B cell (primary cell): ENCODE measurements at regions of chr3 and their contacts with region 1.

Region 1: GRCh38 chr3:10389995-10390394 is 69.1 kb upstream of the SEC13 start:
- DNase-seq: peak; percentile 83
- ATAC-seq: peak; percentile 91
- H3K4me3 ChIP-seq: peak overlapping the region in 2 of 5 experiments; percentile 29 to 31
- H3K4me3 Mint-ChIP-seq: peak overlapping the region; percentile 17
- H3K27ac ChIP-seq: peak overlapping the region; percentile 81 to 89
- H3K27ac Mint-ChIP-seq: peak overlapping the region; percentile 95
- H3K4me1 ChIP-seq: peaks cover 54 to 92% of the 10 kb centered on the region in 2 donors
- H3K4me1 Mint-ChIP-seq: peaks cover 92% of the 10 kb centered on the region
- H3K27me3 ChIP-seq: no peaks in the 10 kb centered on the region
- H3K27me3 Mint-ChIP-seq: no peaks in the 10 kb centered on the region
- CTCF ChIP-seq: no peak

Region 2: GRCh38 chr3:10357592-10358308 is 32.2 kb before region 1 on chr3:
- CTCF ChIA-PET with region 1: interaction called, 4 read pairs
- POLR2A ChIA-PET with region 1: no interaction called
- intact Hi-C with region 1: loop called (anchors 5 kb)
- DNase-seq: no peak
- ATAC-seq: peak; percentile 91
- H3K4me3 ChIP-seq: no peak overlapping the region
- H3K4me3 Mint-ChIP-seq: no peak overlapping the region
- H3K27ac ChIP-seq: no peak overlapping the region
- H3K27ac Mint-ChIP-seq: peak overlapping the region; percentile 59
- H3K4me1 ChIP-seq: peaks cover 15 to 35% of the 10 kb centered on the region in 2 donors
- H3K4me1 Mint-ChIP-seq: peaks cover 52% of the 10 kb centered on the region
- H3K27me3 ChIP-seq: peaks cover 0 to 4% (median 0%) of the 10 kb centered on the region in 4 experiments
- H3K27me3 Mint-ChIP-seq: peaks cover 5% of the 10 kb centered on the region
- CTCF ChIP-seq: no peak

Region 3: GRCh38 chr3:10542518-10542917 is 152.5 kb after region 1 on chr3:
- CTCF ChIA-PET with region 1: no interaction called
- POLR2A ChIA-PET with region 1: no interaction called
- intact Hi-C with region 1: no loop called
- DNase-seq: no peak
- ATAC-seq: no peak
- H3K4me3 ChIP-seq: no peak overlapping the region
- H3K4me3 Mint-ChIP-seq: no peak overlapping the region
- H3K27ac ChIP-seq: no peak overlapping the region
- H3K27ac Mint-ChIP-seq: no peak overlapping the region
- H3K4me1 ChIP-seq: no peaks in the 10 kb centered on the region
- H3K4me1 Mint-ChIP-seq: no peaks in the 10 kb centered on the region
- H3K27me3 ChIP-seq: peaks cover 0 to under 1% (median 0%) of the 10 kb centered on the region in 4 experiments
- H3K27me3 Mint-ChIP-seq: peaks cover 19% of the 10 kb centered on the region
- CTCF ChIP-seq: no peak

Region 4: GRCh38 chr3:11145888-11146287 is 755.9 kb after region 1 on chr3:
- CTCF ChIA-PET with region 1: no interaction called
- POLR2A ChIA-PET with region 1: no interaction called
- intact Hi-C with region 1: no loop called
- DNase-seq: no peak
- ATAC-seq: no peak
- H3K4me3 ChIP-seq: no peak overlapping the region
- H3K4me3 Mint-ChIP-seq: no peak overlapping the region
- H3K27ac ChIP-seq: no peak overlapping the region
- H3K27ac Mint-ChIP-seq: no peak overlapping the region
- H3K4me1 ChIP-seq: peaks cover 5 to 12% of the 10 kb centered on the region in 2 donors
- H3K4me1 Mint-ChIP-seq: peaks cover 19% of the 10 kb centered on the region
- H3K27me3 ChIP-seq: peaks cover 0 to under 1% (median 0%) of the 10 kb centered on the region in 4 experiments
- H3K27me3 Mint-ChIP-seq: peaks cover 14% of the 10 kb centered on the region
- CTCF ChIP-seq: no peak